ENCODE measurements at regions of chr11 and their contacts with region 1.

Region 1: GRCh38 chr11:11787305-11788062 is 54.3 kb upstream of the USP47 start:
- DNase-seq: peak; percentile 78

Region 2: GRCh38 chr11:10792398-10792975 is 995.0 kb before region 1 on chr11:
- in situ Hi-C with region 1: loop called (anchors 25 kb)
- DNase-seq: peak; percentile 79

Region 3: GRCh38 chr11:11028017-11028692 is 759.3 kb before region 1 on chr11:
- in situ Hi-C with region 1: loop called (anchors 25 kb)
- DNase-seq: peak; percentile 81

Region 4: GRCh38 chr11:12043959-12044819 is 256.7 kb after region 1 on chr11:
- in situ Hi-C with region 1: loop called (anchors 25 kb)
- DNase-seq: peak; percentile 79

Region 5: DNA sequence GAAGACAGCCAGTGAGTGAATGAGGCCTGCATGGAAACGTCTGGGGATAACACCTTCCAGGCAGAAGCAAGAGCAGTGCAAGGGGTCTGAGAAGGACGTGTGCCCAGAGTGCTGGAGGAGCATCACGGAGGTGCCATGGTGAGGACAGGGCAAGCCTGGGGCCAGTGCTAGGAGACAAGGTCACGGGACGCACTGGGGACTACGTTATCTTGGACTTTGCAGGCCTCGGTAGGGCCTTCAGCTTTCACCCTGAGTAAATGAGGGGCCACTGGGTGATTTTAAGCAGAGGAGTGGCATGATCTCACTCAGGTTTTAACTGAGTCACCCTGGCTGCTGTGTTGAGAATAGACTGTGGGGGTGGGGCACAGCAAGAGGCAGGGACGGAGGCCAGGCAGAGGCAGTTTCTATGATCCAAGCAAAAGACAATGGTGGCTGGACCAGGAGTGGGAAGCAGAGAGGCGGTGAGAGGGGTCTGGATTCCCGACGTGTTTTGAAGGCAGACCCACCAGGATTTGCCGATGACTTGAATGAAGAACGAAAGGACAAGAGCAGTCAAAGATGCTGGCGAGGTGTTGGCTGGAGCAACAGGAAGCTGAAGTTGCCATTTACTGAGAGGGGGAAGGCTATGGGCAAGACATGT is 487.2 kb after region 1 on chr11:
- in situ Hi-C with region 1: no loop called
- DNase-seq: no peak

Measured in KBM-7 (cell line).